GM12878 (cell line): ENCODE measurements at regions of chr9 and their contacts with region 1.

Region 1: GRCh38 chr9:95127249-95128176 is 190.0 kb downstream of the FANCC start:
- DNase-seq: no peak
- ATAC-seq: peak; percentile 97
- H3K4me3 ChIP-seq: no peak overlapping the region
- H3K27ac ChIP-seq: no peak overlapping the region
- H3K4me1 ChIP-seq: no peaks in the 10 kb centered on the region
- H3K27me3 ChIP-seq: no peaks in the 10 kb centered on the region
- CTCF ChIP-seq: peak; percentile 91 to 99 (median 96)
- EP300 ChIP-seq: no peak
- POLR2A ChIP-seq: no peak
- RAD21 ChIP-seq: peak; percentile 86

Region 2: GRCh38 chr9:94656200-94656599 is 471.3 kb before region 1 on chr9:
- CTCF ChIA-PET with region 1: interaction called, 14 read pairs
- POLR2A ChIA-PET with region 1: no interaction called
- RAD21 ChIA-PET with region 1: interaction called, 5 read pairs
- SMC1A ChIA-PET with region 1: no interaction called
- in situ Hi-C with region 1: no loop called
- intact Hi-C with region 1: no loop called
- DNase-seq: peak; percentile 79
- ATAC-seq: peak; percentile 99
- H3K4me3 ChIP-seq: peak overlapping the region; percentile 31; the same call in 1 of the 2 replicates
- H3K27ac ChIP-seq: peak overlapping the region; percentile 60
- H3K4me1 ChIP-seq: peaks cover 17% of the 10 kb centered on the region
- H3K27me3 ChIP-seq: no peaks in the 10 kb centered on the region
- CTCF ChIP-seq: 0 out of 6 replicates have a peak, but pooled peaks of 1 of the 3 experiments have one; percentile 5
- EP300 ChIP-seq: no peak
- POLR2A ChIP-seq: peak; percentile 81
- RAD21 ChIP-seq: no peak

Region 3: GRCh38 chr9:94681508-94681907 is 446.0 kb before region 1 on chr9:
- CTCF ChIA-PET with region 1: interaction called, 355 read pairs
- POLR2A ChIA-PET with region 1: interaction called, 5 read pairs
- RAD21 ChIA-PET with region 1: interaction called, 134 read pairs
- SMC1A ChIA-PET with region 1: interaction called, 143 read pairs
- in situ Hi-C with region 1: loop called (anchors 5 kb)
- intact Hi-C with region 1: loop called (anchors 1 kb)
- DNase-seq: peak; percentile 17
- ATAC-seq: peak; percentile 99
- H3K4me3 ChIP-seq: no peak overlapping the region
- H3K27ac ChIP-seq: no peak overlapping the region
- H3K4me1 ChIP-seq: no peaks in the 10 kb centered on the region; the same call in 1 of the 2 replicates
- H3K27me3 ChIP-seq: no peaks in the 10 kb centered on the region
- CTCF ChIP-seq: peak; percentile 65 to 82 (median 65); a peak in 5 of 6 replicates
- EP300 ChIP-seq: no peak
- POLR2A ChIP-seq: no peak
- RAD21 ChIP-seq: peak; percentile 79

Region 4: GRCh38 chr9:95073021-95073607 is 54.4 kb before region 1 on chr9:
- CTCF ChIA-PET with region 1: no interaction called
- POLR2A ChIA-PET with region 1: no interaction called
- RAD21 ChIA-PET with region 1: no interaction called
- SMC1A ChIA-PET with region 1: no interaction called
- in situ Hi-C with region 1: no loop called
- intact Hi-C with region 1: no loop called
- DNase-seq: no peak
- ATAC-seq: no peak
- H3K4me3 ChIP-seq: no peak overlapping the region
- H3K27ac ChIP-seq: no peak overlapping the region
- H3K4me1 ChIP-seq: no peaks in the 10 kb centered on the region
- H3K27me3 ChIP-seq: no peaks in the 10 kb centered on the region
- CTCF ChIP-seq: no peak
- EP300 ChIP-seq: no peak
- POLR2A ChIP-seq: no peak
- RAD21 ChIP-seq: no peak

Region 5: DNA sequence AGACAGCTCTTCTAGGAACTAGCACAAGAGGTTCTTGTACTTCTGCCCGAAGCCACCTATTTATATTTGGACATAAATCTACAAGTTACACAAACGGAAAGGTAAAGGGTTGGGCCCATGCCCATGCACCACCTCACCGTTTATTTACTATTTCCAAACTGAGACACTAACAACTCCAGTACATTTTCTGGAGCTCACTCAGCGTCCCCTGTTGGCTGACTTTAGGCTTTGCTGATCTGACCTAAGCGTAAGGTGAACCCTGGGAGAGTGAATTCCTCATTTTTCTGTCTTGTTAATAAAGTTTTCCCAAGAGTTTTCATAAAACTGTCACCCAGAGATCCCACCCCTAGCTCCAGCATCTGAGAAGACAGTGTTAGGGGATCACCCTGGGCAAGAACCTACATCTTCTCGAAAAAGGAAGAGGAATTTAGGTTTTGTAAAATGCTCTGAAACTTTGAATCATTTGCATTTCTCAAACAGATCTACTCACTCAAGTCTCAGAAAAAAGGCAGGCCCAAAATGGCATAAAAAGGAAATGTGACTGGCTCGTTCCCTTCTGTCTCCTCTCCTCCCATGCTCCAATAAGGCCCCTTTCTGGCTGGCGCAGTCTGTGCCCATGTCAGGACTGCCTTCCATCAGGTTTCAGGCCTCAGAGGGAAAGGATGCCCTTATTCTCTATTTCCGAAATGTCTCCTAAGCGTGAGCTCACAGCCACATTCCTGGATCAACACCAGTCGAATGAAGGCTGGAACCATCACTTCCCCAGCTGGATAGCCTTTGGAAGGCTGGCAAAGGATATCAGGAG is 11.3 kb before region 1 on chr9:
- CTCF ChIA-PET with region 1: interaction called, 58 read pairs
- POLR2A ChIA-PET with region 1: interaction called, 4 read pairs
- RAD21 ChIA-PET with region 1: interaction called, 4 read pairs
- SMC1A ChIA-PET with region 1: interaction called, 6 read pairs
- in situ Hi-C with region 1: no loop called
- intact Hi-C with region 1: no loop called
- DNase-seq: no peak
- ATAC-seq: no peak; the same call in 1 of the 3 replicates
- H3K4me3 ChIP-seq: no peak overlapping the region
- H3K27ac ChIP-seq: peak overlapping the region; percentile 40; the same call in 1 of the 2 replicates
- H3K4me1 ChIP-seq: peaks cover 13% of the 10 kb centered on the region
- H3K27me3 ChIP-seq: no peaks in the 10 kb centered on the region
- CTCF ChIP-seq: peak in 1 of 3 experiments; percentile 14; a peak in 1 of 6 replicates
- EP300 ChIP-seq: no peak
- POLR2A ChIP-seq: no peak
- RAD21 ChIP-seq: no peak

Region 6: DNA sequence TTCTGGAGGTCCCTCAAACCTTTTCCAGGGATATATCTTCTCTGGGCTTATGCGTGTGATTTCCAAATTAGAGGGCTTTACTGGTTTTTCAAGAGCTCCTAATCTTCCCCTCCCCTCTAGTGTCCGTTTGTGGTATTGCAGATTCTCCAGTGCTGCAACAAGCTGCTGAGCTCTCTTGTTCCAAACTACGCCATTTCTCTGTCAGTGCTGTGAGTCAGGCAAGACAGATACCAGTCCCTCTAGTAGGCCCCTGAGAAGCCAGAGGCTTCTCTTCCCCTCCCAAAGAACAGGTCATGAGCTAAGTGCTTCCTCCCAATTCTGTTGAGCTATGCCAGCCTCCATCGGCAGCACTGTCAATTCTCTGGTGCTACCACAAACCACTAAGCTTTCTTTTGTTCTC is 40.5 kb after region 1 on chr9:
- CTCF ChIA-PET with region 1: interaction called, 188 read pairs
- POLR2A ChIA-PET with region 1: no interaction called
- RAD21 ChIA-PET with region 1: interaction called, 46 read pairs
- SMC1A ChIA-PET with region 1: interaction called, 49 read pairs
- in situ Hi-C with region 1: no loop called
- intact Hi-C with region 1: no loop called
- DNase-seq: no peak
- ATAC-seq: peak; percentile 72
- H3K4me3 ChIP-seq: no peak overlapping the region
- H3K27ac ChIP-seq: no peak overlapping the region
- H3K4me1 ChIP-seq: peaks cover 5% of the 10 kb centered on the region; the same call in 1 of the 2 replicates
- H3K27me3 ChIP-seq: no peaks in the 10 kb centered on the region
- CTCF ChIP-seq: peak; percentile 56 to 87 (median 81)
- EP300 ChIP-seq: no peak
- POLR2A ChIP-seq: no peak
- RAD21 ChIP-seq: peak; percentile 59

Region 7: GRCh38 chr9:95363051-95363841 is 235.7 kb after region 1 on chr9:
- CTCF ChIA-PET with region 1: no interaction called
- POLR2A ChIA-PET with region 1: no interaction called
- RAD21 ChIA-PET with region 1: no interaction called
- SMC1A ChIA-PET with region 1: no interaction called
- in situ Hi-C with region 1: no loop called
- intact Hi-C with region 1: no loop called
- DNase-seq: no peak
- ATAC-seq: no peak
- H3K4me3 ChIP-seq: no peak overlapping the region
- H3K27ac ChIP-seq: no peak overlapping the region
- H3K4me1 ChIP-seq: no peaks in the 10 kb centered on the region
- H3K27me3 ChIP-seq: no peaks in the 10 kb centered on the region
- CTCF ChIP-seq: no peak
- EP300 ChIP-seq: no peak
- POLR2A ChIP-seq: no peak
- RAD21 ChIP-seq: no peak